Adrenal gland (tissue), 19 donors: ENCODE measurements at regions of chr3 and their contacts with region 1.

Region 1: DNA sequence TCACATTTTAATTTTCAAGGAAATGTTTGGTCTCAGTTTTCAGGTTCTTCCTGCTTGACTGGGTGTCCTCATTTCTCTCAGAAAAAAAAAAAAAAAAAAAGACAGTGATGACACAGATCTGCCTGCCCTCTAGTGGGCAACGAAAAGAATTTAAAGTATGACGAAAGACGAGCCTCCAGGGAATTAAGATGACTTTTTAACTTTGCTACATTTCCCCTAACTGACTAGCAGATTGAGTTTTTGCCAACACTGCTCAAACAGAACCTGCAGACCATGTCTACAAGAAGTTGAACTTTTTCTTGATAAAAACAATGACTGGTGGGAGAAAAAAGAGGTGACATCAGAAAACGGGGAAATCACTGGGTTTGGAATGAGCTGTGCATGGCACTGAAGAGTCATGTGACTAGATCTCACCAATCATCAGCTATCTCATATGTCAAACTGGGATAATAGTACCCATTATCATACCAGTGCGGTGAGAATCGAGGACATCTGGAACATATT is 40.8 kb downstream of the EOMES start:
- DNase-seq: peak in 2 of 7 donors; percentile 24 to 26
- H3K4me3 ChIP-seq: peak overlapping the region in 1 of 4 donors; percentile 30
- H3K27ac ChIP-seq: peak overlapping the region; percentile 47 to 87 (median 70)
- H3K4me1 ChIP-seq: peaks cover 14 to 16% of the 10 kb centered on the region in 2 donors
- H3K27me3 ChIP-seq: no peaks in the 10 kb centered on the region
- CTCF ChIP-seq: peak; percentile 53 to 96 (median 74)
- POLR2A ChIP-seq: no peak

Region 2: GRCh38 chr3:27312044-27312668 is 369.1 kb before region 1 on chr3:
- intact Hi-C with region 1: loop called in 1 of 2 experiments (anchors 5 kb)
- DNase-seq: no peak
- H3K4me3 ChIP-seq: no peak overlapping the region
- H3K27ac ChIP-seq: no peak overlapping the region
- H3K4me1 ChIP-seq: peaks cover 0 to 3% of the 10 kb centered on the region in 2 donors
- H3K27me3 ChIP-seq: no peaks in the 10 kb centered on the region
- CTCF ChIP-seq: peak; percentile 66 to 80 (median 72)
- POLR2A ChIP-seq: no peak

Region 3: GRCh38 chr3:27368831-27369607 is 312.3 kb before region 1 on chr3 and contains the start of gene NEK10:
- intact Hi-C with region 1: loop called in 1 of 2 experiments (anchors 10 kb)
- DNase-seq: peak; percentile 94 to 98 (median 96)
- H3K4me3 ChIP-seq: peak within 1 kb of the TSS; percentile 43 to 94 (median 62)
- H3K27ac ChIP-seq: no peak within 1 kb of the TSS
- H3K4me1 ChIP-seq: peaks cover 0 to 4% of the 10 kb centered on the region in 2 donors
- H3K27me3 ChIP-seq: no peaks in the 10 kb centered on the region
- CTCF ChIP-seq: peak in 2 of 6 experiments; percentile 14 to 17
- POLR2A ChIP-seq: no peak
- total RNA-seq, gene NEK10: 0.25 to 4.8 (median 0.80) TPM

Region 4: GRCh38 chr3:27827041-27827440 is 145.7 kb after region 1 on chr3:
- intact Hi-C with region 1: no loop called
- DNase-seq: no peak
- H3K4me3 ChIP-seq: no peak overlapping the region
- H3K27ac ChIP-seq: no peak overlapping the region
- H3K4me1 ChIP-seq: no peaks in the 10 kb centered on the region
- H3K27me3 ChIP-seq: peaks cover 6% of the 10 kb centered on the region
- CTCF ChIP-seq: no peak
- POLR2A ChIP-seq: no peak

Region 5: DNA sequence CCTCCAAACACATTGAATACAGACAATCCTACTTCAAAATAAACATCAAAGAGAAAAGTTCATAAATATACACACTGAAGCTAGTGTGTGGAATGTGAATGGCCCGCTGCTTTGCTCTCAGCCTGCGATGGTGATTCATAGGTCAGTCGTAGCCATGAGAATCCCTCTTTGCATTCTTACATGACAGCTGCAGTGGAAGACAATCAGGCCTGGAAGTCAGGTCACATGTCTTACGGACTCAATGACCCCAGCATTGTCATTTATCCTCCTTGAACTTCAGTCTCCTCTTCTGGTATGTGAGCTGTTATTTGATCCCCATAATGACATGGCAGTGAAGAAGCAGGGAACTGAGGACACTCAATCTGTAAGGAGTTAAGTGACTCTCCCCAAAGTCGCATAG is 258.6 kb after region 1 on chr3:
- intact Hi-C with region 1: no loop called
- DNase-seq: peak in 2 of 7 donors; percentile 7 to 12
- H3K4me3 ChIP-seq: no peak overlapping the region
- H3K27ac ChIP-seq: no peak overlapping the region
- H3K4me1 ChIP-seq: no peaks in the 10 kb centered on the region
- H3K27me3 ChIP-seq: no peaks in the 10 kb centered on the region
- CTCF ChIP-seq: no peak
- POLR2A ChIP-seq: no peak

Region 6: DNA sequence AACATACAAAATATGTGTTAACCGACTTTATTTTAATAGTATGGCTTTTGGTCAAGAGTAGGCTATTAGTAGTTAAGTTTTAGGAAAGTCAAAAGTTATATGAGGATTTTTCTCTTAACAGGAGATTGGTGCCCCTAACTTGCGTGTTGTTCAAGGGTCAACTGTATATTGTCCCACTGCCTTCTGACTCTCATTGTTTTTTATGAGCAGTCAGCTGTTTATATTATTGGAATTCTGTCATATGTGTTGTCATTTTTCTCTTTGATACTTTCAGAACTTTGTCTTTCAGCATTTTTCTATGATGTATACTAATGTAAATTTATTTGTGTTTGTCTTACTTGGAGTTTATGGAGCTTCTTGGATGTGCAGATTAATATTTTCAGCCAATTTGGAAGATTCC is 418.0 kb after region 1 on chr3:
- intact Hi-C with region 1: no loop called
- DNase-seq: no peak
- H3K4me3 ChIP-seq: no peak overlapping the region
- H3K27ac ChIP-seq: no peak overlapping the region
- H3K4me1 ChIP-seq: no peaks in the 10 kb centered on the region
- H3K27me3 ChIP-seq: no peaks in the 10 kb centered on the region
- CTCF ChIP-seq: no peak
- POLR2A ChIP-seq: no peak

Region 7: GRCh38 chr3:28109829-28110228 is 428.5 kb after region 1 on chr3:
- intact Hi-C with region 1: no loop called
- DNase-seq: no peak
- H3K4me3 ChIP-seq: no peak overlapping the region
- H3K27ac ChIP-seq: no peak overlapping the region
- H3K4me1 ChIP-seq: no peaks in the 10 kb centered on the region
- H3K27me3 ChIP-seq: no peaks in the 10 kb centered on the region
- CTCF ChIP-seq: no peak
- POLR2A ChIP-seq: no peak